ENCODE measurements at regions of chr12 and their contacts with region 1.

Region 1: DNA sequence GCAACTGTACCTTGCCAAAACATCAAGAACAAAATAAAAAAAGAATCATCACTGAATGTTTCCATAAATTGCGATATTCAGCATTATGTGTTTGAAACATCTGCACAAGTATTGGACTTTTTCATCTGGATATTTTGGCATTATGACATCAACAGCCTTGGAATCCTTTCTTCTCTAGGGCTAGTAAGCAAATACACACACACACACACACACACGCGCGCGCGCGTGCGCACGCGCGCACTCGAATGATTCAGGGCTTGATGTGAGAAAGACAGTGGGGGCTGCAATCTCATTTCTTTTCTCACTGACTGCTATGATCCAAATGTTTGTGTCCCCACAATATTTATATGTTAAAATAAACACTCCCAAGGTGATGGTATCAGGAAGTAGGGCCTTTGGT is 90.0 kb upstream of the SLC38A4 start:
- DNase-seq: peak in 1 of 2 donors; percentile 55
- H3K4me3 ChIP-seq: no peak overlapping the region
- H3K27ac ChIP-seq: no peak overlapping the region
- H3K4me1 ChIP-seq: no peaks in the 10 kb centered on the region
- H3K27me3 ChIP-seq: no peaks in the 10 kb centered on the region
- CTCF ChIP-seq: no peak
- POLR2A ChIP-seq: no peak

Region 2: DNA sequence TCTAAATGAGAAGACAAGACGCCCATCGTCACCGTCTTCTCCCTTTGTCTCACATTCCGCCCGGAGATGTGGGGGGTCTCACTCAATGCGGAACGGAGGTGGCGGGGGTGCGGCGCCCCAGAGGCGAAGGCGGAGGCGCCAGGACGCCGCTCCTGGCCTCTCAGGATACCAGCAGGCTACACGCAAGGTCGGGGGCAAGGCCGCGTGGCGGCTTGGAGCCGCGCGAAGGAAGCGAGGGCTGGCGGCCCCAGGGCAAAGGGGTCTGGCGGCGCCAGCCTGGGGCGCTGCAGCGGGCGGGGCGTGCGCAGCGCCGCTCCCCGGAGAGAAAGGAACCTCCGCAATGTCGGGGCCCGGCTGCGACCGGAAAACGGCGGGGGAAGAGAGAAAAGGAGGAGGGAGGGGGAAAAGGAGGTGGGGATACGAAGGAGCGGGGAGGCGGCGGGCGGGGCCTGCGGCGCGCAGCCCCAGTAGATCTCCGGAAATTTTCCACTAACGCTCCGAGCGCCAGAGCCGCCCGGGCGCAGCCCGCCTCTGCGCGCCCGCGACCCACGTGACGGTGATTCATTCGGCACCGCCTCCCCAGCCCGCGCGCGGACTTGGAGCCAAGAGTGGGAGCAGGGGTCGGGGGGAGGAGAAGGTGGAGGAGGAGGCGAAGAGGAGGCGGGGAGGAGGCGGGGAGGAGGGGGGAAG is 532.7 kb before region 1 on chr12:
- intact Hi-C with region 1: no loop called
- DNase-seq: peak; percentile 98
- H3K4me3 ChIP-seq: peak overlapping the region; percentile 79 to 80
- H3K27ac ChIP-seq: peak overlapping the region; percentile 100
- H3K4me1 ChIP-seq: peaks cover 3 to 20% of the 10 kb centered on the region in 2 donors
- H3K27me3 ChIP-seq: no peaks in the 10 kb centered on the region
- CTCF ChIP-seq: peak; percentile 13 to 48 (median 38)
- POLR2A ChIP-seq: peak; percentile 93 to 97

Region 3: DNA sequence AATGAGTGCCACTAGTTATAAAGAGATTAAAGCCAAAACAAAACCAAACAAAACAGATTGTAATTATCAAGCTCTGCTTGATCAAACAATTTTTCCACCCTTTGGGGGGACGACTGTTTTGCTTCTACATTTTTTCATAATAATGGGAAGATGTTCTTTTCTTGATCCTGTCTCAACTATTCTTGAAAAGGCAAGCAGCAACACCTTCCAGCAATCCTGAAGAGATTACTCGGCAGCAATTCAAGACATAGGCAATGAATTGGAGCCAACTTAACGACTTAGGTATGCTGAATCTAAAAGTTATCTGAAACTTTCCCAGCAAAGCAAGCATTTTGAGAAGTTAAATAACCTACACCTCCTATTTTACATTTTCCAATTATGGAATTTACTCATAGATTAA is 20.1 kb before region 1 on chr12:
- intact Hi-C with region 1: loop called (anchors 2 kb)
- DNase-seq: no peak
- H3K4me3 ChIP-seq: no peak overlapping the region
- H3K27ac ChIP-seq: no peak overlapping the region
- H3K4me1 ChIP-seq: peaks cover 0 to 9% of the 10 kb centered on the region in 2 donors
- H3K27me3 ChIP-seq: no peaks in the 10 kb centered on the region
- CTCF ChIP-seq: no peak
- POLR2A ChIP-seq: no peak

Measured in uterus (tissue), 4 donors.